ENCODE measurements at regions of chr1 and their contacts with region 1.

Region 1: DNA sequence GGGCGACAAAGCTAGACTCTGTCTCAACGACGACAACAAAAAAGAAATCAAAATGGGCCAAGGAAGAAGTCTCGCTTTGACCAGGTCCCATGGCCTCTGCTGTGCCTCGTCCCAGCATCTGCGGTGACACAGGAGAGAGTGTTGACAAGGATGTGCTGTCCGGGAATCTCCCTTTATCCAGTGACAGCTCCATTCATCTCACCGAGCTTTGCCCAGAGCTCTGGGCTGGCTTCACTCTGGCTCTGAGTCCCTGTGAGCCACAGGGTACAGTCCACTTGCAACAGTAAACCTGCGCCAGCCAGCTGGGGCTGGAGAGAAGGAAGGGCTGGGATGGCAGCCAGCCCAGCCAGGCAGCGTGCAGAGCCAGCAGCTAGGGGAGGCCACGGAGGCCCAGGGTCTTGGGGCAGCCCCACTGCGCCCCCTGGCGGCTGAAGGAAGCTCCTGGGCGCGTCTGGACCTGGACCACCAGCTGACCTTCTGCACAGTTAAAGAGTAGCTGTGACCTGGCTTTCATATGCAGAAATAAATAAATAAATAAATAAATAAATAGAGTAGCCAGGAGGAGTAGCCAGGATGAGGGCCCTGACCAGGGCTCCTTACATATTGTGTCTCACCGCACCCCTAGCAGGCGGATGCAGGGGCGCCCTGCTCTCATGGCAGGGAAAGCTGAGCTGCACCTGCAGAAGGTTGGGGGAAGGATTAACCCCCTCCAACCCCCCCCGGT is 29.7 kb downstream of the ENO1 start:
- DNase-seq: peak; percentile 92

Region 2: GRCh38 chr1:8560611-8561544 is 287.9 kb before region 1 on chr1:
- CTCF ChIA-PET with region 1: interaction called, 12 read pairs
- POLR2A ChIA-PET with region 1: interaction called, 3 read pairs
- DNase-seq: peak; percentile 40

Region 3: GRCh38 chr1:8660411-8660828 is 188.4 kb before region 1 on chr1:
- CTCF ChIA-PET with region 1: no interaction called
- POLR2A ChIA-PET with region 1: no interaction called
- DNase-seq: no peak

Region 4: DNA sequence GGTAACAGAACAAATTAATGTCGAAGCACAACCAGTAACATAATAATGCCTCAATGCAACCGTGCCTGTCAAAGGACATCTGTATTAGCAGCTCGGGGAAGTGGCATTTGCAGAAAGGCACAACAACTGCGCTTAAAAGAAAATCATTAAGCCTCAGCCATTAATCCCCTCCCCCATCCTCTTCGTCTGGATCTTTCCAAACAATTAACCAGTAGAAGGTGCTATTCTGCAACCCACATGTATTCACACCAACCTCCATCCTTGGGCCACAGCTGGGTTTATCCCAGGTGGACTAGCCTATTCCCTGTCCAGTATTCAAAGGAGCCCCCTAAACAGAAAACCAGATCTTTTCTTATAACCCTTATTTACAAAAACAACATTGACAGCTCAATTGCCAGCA is 34.0 kb before region 1 on chr1:
- CTCF ChIA-PET with region 1: interaction called, 19 read pairs
- POLR2A ChIA-PET with region 1: interaction called, 5 read pairs
- DNase-seq: no peak

Region 5: GRCh38 chr1:8835941-8836643 is 12.7 kb before region 1 on chr1:
- CTCF ChIA-PET with region 1: interaction called, 19 read pairs
- POLR2A ChIA-PET with region 1: no interaction called
- DNase-seq: no peak

Region 6: DNA sequence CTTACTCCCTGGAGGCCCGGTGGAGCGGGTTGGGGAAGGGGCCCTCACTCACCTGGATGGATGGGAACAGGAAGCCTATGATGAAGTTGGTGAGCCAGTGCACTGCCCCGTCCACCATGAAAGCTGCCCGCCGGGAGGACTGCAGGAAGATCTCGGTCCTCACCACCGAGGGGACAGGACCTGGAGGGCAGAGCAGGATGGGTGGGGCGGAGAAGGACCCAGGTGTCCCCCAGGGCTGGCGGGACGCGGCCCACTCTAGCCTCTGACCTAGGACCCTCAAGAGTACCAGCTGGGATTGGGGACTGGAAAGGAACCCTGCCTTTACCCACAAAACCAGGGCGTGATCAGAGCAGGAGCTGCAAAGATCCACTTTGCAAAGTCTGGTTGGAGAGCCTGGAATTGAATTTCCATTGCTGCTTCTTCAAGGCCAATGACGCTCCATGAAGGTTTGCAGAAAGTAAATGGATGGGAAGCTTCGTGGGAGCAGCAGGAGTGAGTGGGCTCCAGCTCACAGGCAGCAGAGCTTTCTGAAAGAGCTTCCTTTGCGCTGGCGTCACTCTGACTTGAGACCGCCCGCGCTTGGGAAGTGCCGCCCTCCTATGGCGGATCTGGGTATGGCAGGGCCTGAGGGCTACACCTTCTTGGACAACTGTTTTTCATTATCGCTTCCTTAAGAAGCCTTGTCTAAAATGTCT is 156.0 kb after region 1 on chr1:
- CTCF ChIA-PET with region 1: interaction called, 11 read pairs
- POLR2A ChIA-PET with region 1: no interaction called
- DNase-seq: peak; percentile 89